ENCODE measurements at regions of chr4 and their contacts with region 1.

Region 1: GRCh38 chr4:20773144-20773997 is 73.1 kb downstream of the PACRGL start:
- DNase-seq: peak; percentile 38
- H3K4me3 Mint-ChIP-seq: no peak overlapping the region
- H3K27ac Mint-ChIP-seq: no peak overlapping the region
- H3K4me1 Mint-ChIP-seq: peaks cover 2% of the 10 kb centered on the region
- H3K27me3 Mint-ChIP-seq: peaks cover 4% of the 10 kb centered on the region

Region 2: GRCh38 chr4:21134994-21135393 is 361.6 kb after region 1 on chr4:
- CTCF ChIA-PET with region 1: no interaction called
- intact Hi-C with region 1: loop called (anchors 1 kb)
- DNase-seq: no peak
- H3K4me3 Mint-ChIP-seq: no peak overlapping the region
- H3K27ac Mint-ChIP-seq: no peak overlapping the region
- H3K4me1 Mint-ChIP-seq: no peaks in the 10 kb centered on the region
- H3K27me3 Mint-ChIP-seq: no peaks in the 10 kb centered on the region

Region 3: GRCh38 chr4:21469438-21470300 is 696.3 kb after region 1 on chr4:
- CTCF ChIA-PET with region 1: interaction called, 9 read pairs
- intact Hi-C with region 1: loop called (anchors 1 kb)
- DNase-seq: no peak
- H3K4me3 Mint-ChIP-seq: no peak overlapping the region
- H3K27ac Mint-ChIP-seq: no peak overlapping the region
- H3K4me1 Mint-ChIP-seq: no peaks in the 10 kb centered on the region
- H3K27me3 Mint-ChIP-seq: peaks cover 2% of the 10 kb centered on the region

Region 4: DNA sequence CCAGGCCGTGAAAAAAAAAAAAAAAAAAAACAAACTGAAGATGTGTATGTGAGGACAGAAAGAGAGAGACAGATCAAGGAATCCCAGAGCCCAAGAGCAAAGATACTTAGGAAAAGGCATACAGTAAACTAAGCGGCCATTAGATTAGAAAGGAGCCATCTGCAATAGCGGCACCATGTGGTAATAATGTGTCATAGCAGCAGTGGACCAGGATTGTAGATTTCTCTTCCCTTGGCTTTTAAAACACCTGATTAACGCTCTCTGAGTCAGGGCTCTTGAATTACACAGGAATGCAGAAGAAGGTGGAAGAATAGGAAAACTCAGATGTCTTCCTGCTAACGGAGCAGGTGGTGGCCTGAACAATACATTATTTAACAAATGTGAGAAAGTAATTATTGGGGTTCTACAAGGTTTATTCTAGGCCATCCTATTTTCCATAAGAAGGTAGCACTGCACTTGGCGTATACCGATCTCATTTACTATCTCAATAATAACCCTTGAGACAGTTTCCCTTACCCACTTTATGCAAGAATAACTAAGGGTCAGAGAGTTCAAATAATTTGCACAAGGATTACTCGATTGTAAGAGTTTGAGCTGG is 992.5 kb after region 1 on chr4:
- CTCF ChIA-PET with region 1: interaction called, 16 read pairs
- intact Hi-C with region 1: loop called (anchors 1 kb)
- DNase-seq: peak; percentile 56
- H3K4me3 Mint-ChIP-seq: no peak overlapping the region
- H3K27ac Mint-ChIP-seq: peak overlapping the region; percentile 59
- H3K4me1 Mint-ChIP-seq: peaks cover 4% of the 10 kb centered on the region
- H3K27me3 Mint-ChIP-seq: peaks cover 7% of the 10 kb centered on the region